ENCODE measurements at regions of chr17 and their contacts with region 1.

Region 1: DNA sequence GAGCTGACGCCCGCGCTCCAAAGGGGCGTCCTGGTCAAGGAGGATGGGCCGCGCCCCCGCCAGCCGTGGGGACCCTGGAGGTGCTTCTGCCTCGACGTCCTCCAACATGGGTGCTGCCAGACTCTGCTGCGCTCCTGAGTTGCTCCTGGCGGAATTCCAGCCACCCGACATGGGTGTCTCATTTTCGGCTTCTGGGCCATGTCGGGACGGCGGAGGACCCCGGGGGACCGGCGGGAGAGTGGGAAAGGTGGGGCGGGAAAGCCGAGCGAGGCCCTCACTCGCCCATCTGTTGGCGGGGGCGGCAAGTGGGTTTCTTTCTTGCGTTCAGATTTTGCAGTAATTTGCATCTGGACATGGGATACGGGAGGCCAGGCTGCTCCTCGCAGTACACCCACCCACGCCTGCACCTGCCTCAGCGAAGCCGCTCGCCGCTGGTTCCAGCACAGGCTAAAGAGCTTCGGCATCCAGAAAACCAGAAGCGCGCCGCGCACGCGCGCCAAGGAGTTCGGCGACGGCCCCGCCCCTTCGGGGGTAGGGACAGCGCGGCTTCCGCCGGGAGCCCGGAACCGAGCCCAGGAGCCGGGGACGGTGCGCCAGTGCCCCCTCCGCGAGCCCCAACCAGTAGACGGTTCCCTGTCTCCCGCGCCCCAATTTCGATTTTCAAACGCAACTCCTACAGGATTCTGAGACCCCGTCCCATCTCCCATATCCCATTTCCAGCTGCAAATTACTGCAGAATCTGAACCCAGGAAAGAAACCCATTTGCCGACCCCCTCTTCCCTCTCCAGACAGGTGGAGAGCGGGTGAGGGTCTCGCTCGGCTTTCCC is at the start of gene ARMC7:
- DNase-seq: peak; percentile 77
- ATAC-seq: peak; percentile 88
- H3K4me3 ChIP-seq: peak within 1 kb of the TSS; percentile 87
- H3K27ac ChIP-seq: peak within 1 kb of the TSS; percentile 48
- H3K4me1 ChIP-seq: 0 out of 2 replicates have a peak, but pooled peaks cover 7% of the 10 kb centered on the region
- H3K27me3 ChIP-seq: peaks cover 2% of the 10 kb centered on the region; the same call in 1 of the 2 replicates
- CTCF ChIP-seq: no peak
- POLR2A ChIP-seq: no peak
- RAD21 ChIP-seq: peak; percentile 2; the same call in 1 of the 2 replicates
- total RNA-seq, gene ARMC7: 1.7 and 1.8 TPM in 2 replicates

Region 2: DNA sequence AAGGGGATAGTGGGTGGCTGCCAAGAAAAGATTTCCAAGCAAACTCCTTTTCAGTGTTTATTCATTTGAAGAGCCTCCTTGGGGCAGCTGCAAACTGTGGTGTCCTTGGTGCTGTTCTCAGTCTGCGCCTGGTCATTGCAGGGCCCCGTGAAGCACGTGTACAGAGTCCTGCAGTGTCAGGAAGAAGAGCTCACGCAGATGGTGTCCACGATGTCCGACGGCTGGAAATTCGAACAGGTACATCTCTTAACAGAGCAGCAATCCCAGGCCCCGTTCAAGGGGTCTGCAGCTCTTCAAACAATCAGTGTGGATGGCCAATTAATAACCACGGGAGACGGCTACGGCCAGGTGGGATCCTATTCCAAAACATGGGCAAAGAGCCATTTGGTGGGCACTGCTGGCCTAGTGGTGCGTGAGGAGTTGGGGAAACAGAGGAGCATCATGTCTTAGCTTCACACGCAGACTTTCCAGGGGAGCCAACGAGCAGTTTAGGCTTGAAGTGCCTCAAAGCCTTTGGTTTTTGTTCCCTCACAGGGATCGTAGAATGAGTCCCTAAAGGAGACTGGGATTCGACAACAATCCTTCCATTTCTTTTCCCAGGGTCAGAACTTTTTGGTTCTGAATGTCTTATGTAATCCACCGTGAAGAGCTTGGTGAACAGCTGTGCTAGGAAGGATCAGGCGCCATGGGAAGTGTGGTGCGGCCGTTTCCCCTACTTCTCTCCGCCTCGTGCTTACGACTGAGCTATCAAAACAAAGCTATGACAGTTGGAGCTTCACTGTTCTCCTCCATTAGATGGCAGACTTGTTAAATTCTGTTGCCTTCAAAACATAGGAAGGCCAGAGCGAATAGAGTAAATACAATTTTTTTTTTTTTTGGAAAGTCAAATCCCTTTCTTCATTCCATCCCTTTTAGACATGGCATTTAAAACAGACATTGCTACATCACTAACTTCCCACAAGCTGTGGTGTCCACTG is 50.0 kb before region 1 on chr17:
- CTCF ChIA-PET with region 1: interaction called, 13 read pairs
- POLR2A ChIA-PET with region 1: interaction called, 3 read pairs
- dilution Hi-C with region 1: no loop called
- in situ Hi-C with region 1: no loop called
- intact Hi-C with region 1: loop called (anchors 5 kb)
- DNase-seq: peak; percentile 81
- ATAC-seq: peak; percentile 98
- H3K4me3 ChIP-seq: no peak overlapping the region
- H3K27ac ChIP-seq: no peak overlapping the region
- H3K4me1 ChIP-seq: peaks cover 6% of the 10 kb centered on the region; the same call in 1 of the 2 replicates
- H3K27me3 ChIP-seq: no peaks in the 10 kb centered on the region
- CTCF ChIP-seq: peak; percentile 77
- POLR2A ChIP-seq: no peak
- RAD21 ChIP-seq: peak; percentile 69

Region 3: GRCh38 chr17:75077496-75078283 is 31.9 kb before region 1 on chr17:
- CTCF ChIA-PET with region 1: interaction called, 12 read pairs
- POLR2A ChIA-PET with region 1: interaction called, 8 read pairs
- dilution Hi-C with region 1: no loop called
- in situ Hi-C with region 1: no loop called
- intact Hi-C with region 1: loop called (anchors 5 kb)
- DNase-seq: no peak
- ATAC-seq: no peak
- H3K4me3 ChIP-seq: no peak overlapping the region
- H3K27ac ChIP-seq: no peak overlapping the region; the same call in 1 of the 2 replicates
- H3K4me1 ChIP-seq: peaks cover 21% of the 10 kb centered on the region
- H3K27me3 ChIP-seq: no peaks in the 10 kb centered on the region
- CTCF ChIP-seq: no peak
- POLR2A ChIP-seq: no peak
- RAD21 ChIP-seq: no peak

Region 4: GRCh38 chr17:75131280-75132017 is 21.8 kb after region 1 on chr17 and contains the start of gene NT5C:
- CTCF ChIA-PET with region 1: interaction called, 13 read pairs
- POLR2A ChIA-PET with region 1: no interaction called
- dilution Hi-C with region 1: no loop called
- in situ Hi-C with region 1: no loop called
- intact Hi-C with region 1: no loop called
- DNase-seq: peak; percentile 61
- ATAC-seq: peak; percentile 89
- H3K4me3 ChIP-seq: peak within 1 kb of the TSS; percentile 91
- H3K27ac ChIP-seq: peak within 1 kb of the TSS; percentile 87
- H3K4me1 ChIP-seq: no peaks in the 10 kb centered on the region; the same call in 1 of the 2 replicates
- H3K27me3 ChIP-seq: no peaks in the 10 kb centered on the region
- CTCF ChIP-seq: peak; percentile 62
- POLR2A ChIP-seq: peak; percentile 54; the same call in 1 of the 2 replicates
- RAD21 ChIP-seq: peak; percentile 41
- total RNA-seq, gene NT5C: 23.1 and 24.0 TPM in 2 replicates

Region 5: DNA sequence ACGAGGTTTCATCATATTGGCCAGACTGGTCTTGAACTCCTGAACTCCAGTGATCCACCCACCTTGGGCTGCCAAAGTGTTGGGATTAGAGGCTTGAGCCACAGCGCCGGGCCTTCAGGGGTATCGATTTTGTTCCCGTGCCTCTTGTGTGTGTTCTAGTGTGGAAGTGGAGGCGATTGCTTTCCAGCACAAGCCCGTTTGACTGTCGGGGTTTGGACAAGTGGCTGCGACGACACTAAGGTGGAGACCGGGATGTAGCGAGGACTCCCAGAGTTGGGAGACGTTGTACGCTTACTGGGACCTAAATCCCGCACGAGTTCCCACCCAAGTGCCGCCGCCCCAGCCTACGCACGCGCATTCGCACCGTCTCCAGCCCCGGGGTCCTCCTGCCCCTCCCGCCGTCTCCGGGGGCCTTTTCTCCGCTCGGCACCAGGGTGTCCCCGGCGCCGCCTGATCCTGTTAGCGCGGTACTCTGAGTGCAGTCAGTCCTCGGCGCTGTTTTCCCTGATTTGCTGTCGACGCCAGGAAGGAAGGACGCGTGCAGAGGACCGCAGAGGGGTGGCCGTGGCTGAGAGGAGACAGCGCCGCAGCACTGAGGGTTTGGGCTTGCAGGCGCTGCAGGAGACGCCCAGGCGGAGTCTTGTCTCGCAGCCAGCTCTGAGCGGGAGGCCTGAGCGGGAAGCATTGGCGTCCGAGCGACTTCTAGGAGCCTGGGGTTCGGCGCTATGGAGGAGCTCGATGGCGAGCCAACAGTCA is 95.6 kb after region 1 on chr17 and contains the start of gene NUP85:
- CTCF ChIA-PET with region 1: interaction called, 22 read pairs
- POLR2A ChIA-PET with region 1: interaction called, 3 read pairs
- dilution Hi-C with region 1: no loop called
- in situ Hi-C with region 1: no loop called
- intact Hi-C with region 1: loop called (anchors 1 kb)
- DNase-seq: peak; percentile 89
- ATAC-seq: peak; percentile 98
- H3K4me3 ChIP-seq: peak within 1 kb of the TSS; percentile 91
- H3K27ac ChIP-seq: peak within 1 kb of the TSS; percentile 98
- H3K4me1 ChIP-seq: no peaks in the 10 kb centered on the region; the same call in 1 of the 2 replicates
- H3K27me3 ChIP-seq: no peaks in the 10 kb centered on the region
- CTCF ChIP-seq: no peak
- POLR2A ChIP-seq: peak; percentile 77
- RAD21 ChIP-seq: no peak
- total RNA-seq, gene NUP85: 26.7 and 29.4 TPM in 2 replicates